AG04450 (cell line): ENCODE measurements at regions of chrX and their contacts with region 1.

Region 1: GRCh38 chrX:70096052-70096451 is 33.8 kb downstream of the OTUD6A start:
- DNase-seq: no peak
- H3K4me3 ChIP-seq: no peak overlapping the region
- H3K27ac ChIP-seq: no peak overlapping the region
- H3K27me3 ChIP-seq: no peaks in the 10 kb centered on the region
- CTCF ChIP-seq: peak; percentile 18; the same call in 1 of the 2 replicates

Region 2: DNA sequence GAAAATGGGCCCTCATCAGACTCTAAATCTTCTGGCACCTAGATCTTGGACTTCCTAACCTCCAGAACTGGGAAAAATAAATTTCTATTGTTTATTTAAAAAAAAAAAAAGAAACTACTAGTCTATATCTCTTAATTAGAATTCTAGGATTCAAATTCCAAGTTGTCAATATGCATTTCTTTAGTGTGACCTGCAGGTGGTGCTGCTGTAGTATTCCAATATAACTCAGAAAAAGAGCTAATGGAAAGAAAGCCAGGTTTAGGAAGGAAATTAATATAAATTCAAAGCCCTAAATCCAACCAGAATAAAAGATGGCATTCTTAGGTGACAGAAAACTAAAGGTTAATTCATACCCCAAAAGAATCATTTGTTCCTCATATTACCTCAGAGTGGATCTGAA is 671.9 kb before region 1 on chrX:
- CTCF ChIA-PET with region 1: interaction called, 17 read pairs
- POLR2A ChIA-PET with region 1: no interaction called
- DNase-seq: no peak
- H3K4me3 ChIP-seq: no peak overlapping the region
- H3K27ac ChIP-seq: no peak overlapping the region
- H3K27me3 ChIP-seq: no peaks in the 10 kb centered on the region
- CTCF ChIP-seq: peak; percentile 36

Region 3: GRCh38 chrX:69538321-69538876 is 557.7 kb before region 1 on chrX:
- CTCF ChIA-PET with region 1: interaction called, 36 read pairs
- POLR2A ChIA-PET with region 1: no interaction called
- DNase-seq: peak; percentile 4
- H3K4me3 ChIP-seq: peak overlapping the region; percentile 37
- H3K27ac ChIP-seq: no peak overlapping the region
- H3K27me3 ChIP-seq: no peaks in the 10 kb centered on the region
- CTCF ChIP-seq: peak; percentile 64

Region 4: DNA sequence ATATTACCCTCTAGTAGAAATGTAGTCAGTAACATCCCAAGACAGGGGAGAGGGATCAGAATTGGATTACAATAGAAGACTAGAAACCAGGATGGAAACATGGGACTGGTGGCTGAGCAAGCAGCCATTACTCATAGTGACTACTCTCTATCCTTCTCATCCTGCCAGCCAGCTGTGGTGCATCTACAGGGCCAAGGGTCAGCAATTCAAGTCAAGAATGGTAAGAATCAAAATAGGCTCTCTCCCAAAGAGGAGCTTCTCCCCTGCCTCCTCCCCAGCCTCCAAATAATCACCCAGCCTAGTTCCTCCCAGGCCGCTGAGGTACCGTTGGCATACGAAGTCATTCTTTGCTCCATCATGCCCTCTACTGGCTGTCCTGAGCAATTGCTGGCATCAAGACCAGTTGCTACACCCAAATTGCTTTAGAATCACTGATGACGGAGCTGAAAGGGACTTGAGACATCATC is 65.7 kb before region 1 on chrX:
- CTCF ChIA-PET with region 1: interaction called, 56 read pairs
- POLR2A ChIA-PET with region 1: no interaction called
- DNase-seq: no peak
- H3K4me3 ChIP-seq: no peak overlapping the region
- H3K27ac ChIP-seq: no peak overlapping the region
- H3K27me3 ChIP-seq: no peaks in the 10 kb centered on the region
- CTCF ChIP-seq: peak; percentile 67

Region 5: DNA sequence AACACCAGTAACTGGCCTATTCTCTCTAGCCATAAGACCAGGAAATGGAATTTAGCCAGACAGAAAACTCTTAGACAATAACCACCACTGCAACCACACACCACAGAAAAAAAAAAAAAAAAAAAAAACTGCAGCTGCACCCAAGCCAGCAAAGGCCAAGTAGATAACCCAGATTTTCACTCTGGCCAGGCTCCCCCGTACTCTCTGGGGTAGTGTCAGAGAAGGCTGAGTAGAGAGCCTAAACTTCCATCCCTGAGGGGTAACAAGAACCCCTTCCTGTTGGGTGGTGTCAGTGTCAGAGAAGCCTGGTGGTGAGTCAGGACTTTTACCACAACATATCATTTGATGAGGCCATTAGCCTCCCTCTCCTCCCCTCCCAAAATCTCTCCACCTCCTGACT is 343.0 kb after region 1 on chrX:
- CTCF ChIA-PET with region 1: no interaction called
- POLR2A ChIA-PET with region 1: no interaction called
- DNase-seq: no peak
- H3K4me3 ChIP-seq: no peak overlapping the region
- H3K27ac ChIP-seq: no peak overlapping the region
- H3K27me3 ChIP-seq: peaks cover 4% of the 10 kb centered on the region
- CTCF ChIP-seq: no peak